GM12878 (cell line): ENCODE measurements at regions of chr7 and their contacts with region 1.

Region 1: DNA sequence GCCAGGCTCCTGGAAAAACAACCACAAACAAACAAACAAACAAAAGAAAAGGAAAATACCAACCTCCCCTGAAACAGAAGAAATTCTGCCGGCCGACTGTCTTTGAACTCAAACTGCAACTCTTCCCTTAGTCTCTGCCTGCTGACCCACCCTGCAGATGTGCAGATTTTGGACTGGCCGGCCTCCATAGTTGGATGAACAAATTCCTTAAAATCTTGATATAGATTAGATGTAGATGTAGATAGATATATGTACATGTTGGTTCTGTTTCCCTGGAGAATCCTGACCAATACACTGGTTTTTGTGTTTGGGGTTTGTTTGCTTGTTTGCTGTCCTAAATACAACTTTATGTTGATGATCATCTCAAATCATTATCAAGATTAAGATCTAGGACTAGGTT is 227.6 kb downstream of the SNX13 start:
- DNase-seq: no peak
- ATAC-seq: no peak
- H3K4me3 ChIP-seq: no peak overlapping the region
- H3K27ac ChIP-seq: no peak overlapping the region
- H3K4me1 ChIP-seq: no peaks in the 10 kb centered on the region
- H3K27me3 ChIP-seq: 0 out of 4 replicates have a peak, but pooled peaks cover 0 to 3% of the 10 kb centered on the region in 2 experiments
- CTCF ChIP-seq: no peak
- EP300 ChIP-seq: no peak
- POLR2A ChIP-seq: no peak
- RAD21 ChIP-seq: no peak

Region 2: GRCh38 chr7:17690030-17690429 is 22.7 kb before region 1 on chr7:
- CTCF ChIA-PET with region 1: no interaction called
- POLR2A ChIA-PET with region 1: no interaction called
- RAD21 ChIA-PET with region 1: no interaction called
- SMC1A ChIA-PET with region 1: no interaction called
- in situ Hi-C with region 1: no loop called
- intact Hi-C with region 1: no loop called
- DNase-seq: peak; percentile 11
- ATAC-seq: peak; percentile 48
- H3K4me3 ChIP-seq: no peak overlapping the region
- H3K27ac ChIP-seq: no peak overlapping the region
- H3K4me1 ChIP-seq: no peaks in the 10 kb centered on the region
- H3K27me3 ChIP-seq: no peaks in the 10 kb centered on the region
- CTCF ChIP-seq: no peak
- EP300 ChIP-seq: no peak
- POLR2A ChIP-seq: no peak
- RAD21 ChIP-seq: no peak

Region 3: DNA sequence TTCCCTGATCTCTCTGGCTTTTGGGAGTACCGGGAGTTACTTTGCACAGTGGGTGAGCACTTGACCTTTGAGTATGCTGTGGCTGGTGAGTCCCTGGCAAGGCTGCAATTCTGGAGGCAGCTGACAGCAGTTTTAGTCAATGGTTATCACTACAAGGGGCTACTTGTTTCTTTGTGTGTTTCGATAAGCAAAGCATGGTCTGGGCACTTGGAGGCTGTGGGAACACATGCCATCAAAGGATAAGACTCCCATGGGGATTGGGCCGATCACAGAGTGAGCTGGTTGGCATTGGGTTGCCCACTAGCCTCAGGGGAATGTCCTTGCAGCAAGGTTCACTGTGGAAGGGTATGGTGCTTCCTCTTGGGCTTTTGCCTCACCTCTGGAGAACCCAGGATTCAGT is 19.4 kb after region 1 on chr7:
- CTCF ChIA-PET with region 1: no interaction called
- POLR2A ChIA-PET with region 1: no interaction called
- RAD21 ChIA-PET with region 1: no interaction called
- SMC1A ChIA-PET with region 1: interaction called, 3 read pairs
- in situ Hi-C with region 1: no loop called
- intact Hi-C with region 1: loop called (anchors 1 kb)
- DNase-seq: no peak
- ATAC-seq: no peak
- H3K4me3 ChIP-seq: no peak overlapping the region
- H3K27ac ChIP-seq: no peak overlapping the region
- H3K4me1 ChIP-seq: no peaks in the 10 kb centered on the region
- H3K27me3 ChIP-seq: no peaks in the 10 kb centered on the region; a peak in 1 of 4 replicates
- CTCF ChIP-seq: no peak
- EP300 ChIP-seq: no peak
- POLR2A ChIP-seq: no peak
- RAD21 ChIP-seq: no peak